Activated CD4-positive, alpha-beta memory T cell treated with anti-CD3 and anti-CD28 coated beads for 36 hours (primary cell): ENCODE measurements at regions of chr3 and their contacts with region 1.

Region 1: GRCh38 chr3:52197842-52198668 is at the start of gene ALAS1:
- DNase-seq: peak; percentile 97
- H3K4me3 Mint-ChIP-seq: peak within 1 kb of the TSS; percentile 98
- H3K27ac Mint-ChIP-seq: peak within 1 kb of the TSS; percentile 81
- H3K4me1 Mint-ChIP-seq: peaks cover 46% of the 10 kb centered on the region
- H3K27me3 Mint-ChIP-seq: no peaks in the 10 kb centered on the region
- total RNA-seq, gene ALAS1: 64.4 to 64.5 TPM

Region 2: DNA sequence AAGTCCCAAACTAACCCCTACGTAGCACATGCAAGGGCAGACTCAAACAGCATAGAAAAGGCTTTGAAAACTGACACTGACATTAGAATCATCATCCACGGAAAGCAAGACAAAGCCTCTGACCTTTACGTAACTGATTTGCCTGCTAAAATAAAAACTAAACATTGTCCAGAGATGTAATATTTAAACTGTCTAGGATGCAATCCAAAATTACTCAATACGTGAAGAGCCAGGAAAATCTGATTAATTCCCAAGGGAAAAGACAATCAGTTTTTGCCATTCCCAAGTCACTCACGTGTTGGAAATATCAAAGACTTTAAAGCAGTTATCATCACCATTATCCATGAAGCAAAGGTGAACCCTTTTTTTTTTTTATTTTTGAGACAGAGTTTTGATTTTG is 281.6 kb before region 1 on chr3:
- CTCF ChIA-PET with region 1: no interaction called
- POLR2A ChIA-PET with region 1: no interaction called
- intact Hi-C with region 1: no loop called
- DNase-seq: no peak
- H3K4me3 Mint-ChIP-seq: no peak overlapping the region
- H3K27ac Mint-ChIP-seq: no peak overlapping the region
- H3K4me1 Mint-ChIP-seq: no peaks in the 10 kb centered on the region
- H3K27me3 Mint-ChIP-seq: peaks cover 4% of the 10 kb centered on the region

Region 3: DNA sequence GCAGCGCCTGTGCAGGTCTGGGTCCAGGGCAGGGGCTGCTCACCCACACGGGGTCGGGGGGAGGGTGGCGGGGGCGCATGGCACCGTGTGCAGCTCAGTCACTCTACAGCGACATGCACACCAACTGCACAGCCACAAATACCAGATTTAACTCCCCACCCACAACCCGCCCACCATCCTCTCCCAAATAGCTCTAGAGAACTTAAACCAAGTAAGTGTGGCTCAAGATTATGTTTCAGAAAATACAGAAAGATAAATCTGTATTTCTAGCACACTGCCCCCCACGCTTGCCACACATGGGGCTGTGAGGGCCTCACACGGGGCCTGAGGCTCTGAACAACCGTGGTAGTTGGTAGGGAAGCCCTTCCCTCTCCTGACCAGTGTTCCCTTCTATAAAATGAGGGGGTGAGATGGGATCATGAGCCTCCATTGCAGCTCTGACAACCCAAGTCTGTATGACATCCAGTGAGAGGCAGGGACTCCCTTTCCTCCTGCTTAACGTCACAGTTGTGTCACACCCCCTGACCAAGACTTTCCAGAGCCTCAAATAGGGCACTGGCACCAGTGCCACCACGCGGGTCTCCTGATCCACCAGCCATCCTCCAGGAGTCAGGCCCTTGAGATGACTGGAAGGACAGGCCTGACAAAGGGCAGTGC is 67.0 kb before region 1 on chr3:
- CTCF ChIA-PET with region 1: no interaction called
- POLR2A ChIA-PET with region 1: no interaction called
- intact Hi-C with region 1: no loop called
- DNase-seq: no peak
- H3K4me3 Mint-ChIP-seq: no peak overlapping the region
- H3K27ac Mint-ChIP-seq: no peak overlapping the region
- H3K4me1 Mint-ChIP-seq: peaks cover 4% of the 10 kb centered on the region
- H3K27me3 Mint-ChIP-seq: no peaks in the 10 kb centered on the region

Region 4: GRCh38 chr3:52154117-52155094 is 43.6 kb before region 1 on chr3 and contains the start of gene POC1A:
- CTCF ChIA-PET with region 1: interaction called, 3 read pairs
- POLR2A ChIA-PET with region 1: no interaction called
- intact Hi-C with region 1: loop called (anchors 1 kb)
- DNase-seq: peak; percentile 94
- H3K4me3 Mint-ChIP-seq: peak within 1 kb of the TSS; percentile 88
- H3K27ac Mint-ChIP-seq: peak within 1 kb of the TSS; percentile 89
- H3K4me1 Mint-ChIP-seq: peaks cover 20% of the 10 kb centered on the region
- H3K27me3 Mint-ChIP-seq: no peaks in the 10 kb centered on the region
- total RNA-seq, gene POC1A: 28.5 to 30.5 TPM

Region 5: DNA sequence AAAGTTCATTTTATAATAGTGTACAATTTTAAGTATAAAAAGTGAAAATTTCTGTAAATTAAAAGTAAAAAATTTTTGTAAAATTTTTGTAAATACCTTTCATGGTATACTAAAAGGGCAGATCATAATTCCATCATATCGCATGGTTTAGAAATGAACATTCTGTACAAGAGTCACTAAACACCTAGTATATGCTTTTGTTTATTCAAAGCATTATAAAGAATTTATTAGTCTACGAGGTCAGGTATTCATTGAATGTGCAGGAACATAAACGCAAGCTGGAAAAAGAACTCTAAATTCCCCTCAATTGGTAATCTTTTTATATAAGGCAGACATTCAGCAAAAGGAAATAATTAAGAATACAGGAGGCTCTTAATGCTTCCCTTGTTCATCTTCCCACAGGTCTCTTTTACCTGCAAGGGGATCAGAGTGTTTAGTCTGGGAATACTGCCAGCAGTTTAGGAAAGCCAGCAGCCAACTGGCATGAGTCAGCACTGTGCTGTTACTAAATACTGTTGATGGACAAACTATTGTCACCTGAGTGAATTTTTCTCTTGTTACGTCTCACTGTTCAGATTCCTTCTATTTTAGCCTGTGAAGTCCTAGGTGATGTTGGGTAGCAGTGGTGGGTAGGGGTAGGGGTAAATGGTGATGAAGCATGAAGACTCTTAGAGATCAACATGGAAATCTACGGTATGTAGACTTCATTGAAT is 408.5 kb after region 1 on chr3:
- CTCF ChIA-PET with region 1: no interaction called
- POLR2A ChIA-PET with region 1: no interaction called
- intact Hi-C with region 1: no loop called
- DNase-seq: no peak
- H3K4me3 Mint-ChIP-seq: no peak overlapping the region
- H3K27ac Mint-ChIP-seq: no peak overlapping the region
- H3K4me1 Mint-ChIP-seq: no peaks in the 10 kb centered on the region
- H3K27me3 Mint-ChIP-seq: no peaks in the 10 kb centered on the region